Heart right ventricle (tissue), 16 donors: ENCODE measurements at regions of chr19 and their contacts with region 1.

Region 1: GRCh38 chr19:12881172-12881808 is at the start of gene DNASE2:
- DNase-seq: peak; percentile 95 to 96
- ATAC-seq: peak; percentile 92 to 97 (median 96)
- H3K4me3 ChIP-seq: peak within 1 kb of the TSS; percentile 62 to 85 (median 74)
- H3K27ac ChIP-seq: peak within 1 kb of the TSS; percentile 67 to 93 (median 86)
- H3K4me1 ChIP-seq: peaks cover 10 to 55% (median 24%) of the 10 kb centered on the region in 9 donors
- H3K27me3 ChIP-seq: peaks cover 0 to 36% (median 27%) of the 10 kb centered on the region in 7 donors
- CTCF ChIP-seq: no peak
- total RNA-seq, gene DNASE2: 16.9 to 34.9 (median 19.9) TPM

Region 2: GRCh38 chr19:12907166-12907565 is 25.9 kb after region 1 on chr19:
- intact Hi-C with region 1: no loop called
- DNase-seq: no peak
- ATAC-seq: no peak
- H3K4me3 ChIP-seq: no peak overlapping the region
- H3K27ac ChIP-seq: no peak overlapping the region
- H3K4me1 ChIP-seq: peaks cover 0 to 3% (median under 1%) of the 10 kb centered on the region in 9 donors
- H3K27me3 ChIP-seq: no peaks in the 10 kb centered on the region
- CTCF ChIP-seq: no peak

Region 3: GRCh38 chr19:12965017-12965811 is 83.9 kb after region 1 on chr19:
- intact Hi-C with region 1: loop called in 4 of 10 experiments (anchors 2 to 10 kb)
- DNase-seq: peak; percentile 77 to 86
- ATAC-seq: peak; percentile 88 to 94 (median 92)
- H3K4me3 ChIP-seq: peak overlapping the region; percentile 16 to 57 (median 53)
- H3K27ac ChIP-seq: peak overlapping the region in 9 of 10 donors; percentile 36 to 73 (median 58)
- H3K4me1 ChIP-seq: peaks cover 0 to 18% (median 7%) of the 10 kb centered on the region in 9 donors
- H3K27me3 ChIP-seq: no peaks in the 10 kb centered on the region
- CTCF ChIP-seq: peak; percentile 82 to 93 (median 84)